GM10248 (cell line): ENCODE measurements at regions of chr17 and their contacts with region 1.

Region 1: DNA sequence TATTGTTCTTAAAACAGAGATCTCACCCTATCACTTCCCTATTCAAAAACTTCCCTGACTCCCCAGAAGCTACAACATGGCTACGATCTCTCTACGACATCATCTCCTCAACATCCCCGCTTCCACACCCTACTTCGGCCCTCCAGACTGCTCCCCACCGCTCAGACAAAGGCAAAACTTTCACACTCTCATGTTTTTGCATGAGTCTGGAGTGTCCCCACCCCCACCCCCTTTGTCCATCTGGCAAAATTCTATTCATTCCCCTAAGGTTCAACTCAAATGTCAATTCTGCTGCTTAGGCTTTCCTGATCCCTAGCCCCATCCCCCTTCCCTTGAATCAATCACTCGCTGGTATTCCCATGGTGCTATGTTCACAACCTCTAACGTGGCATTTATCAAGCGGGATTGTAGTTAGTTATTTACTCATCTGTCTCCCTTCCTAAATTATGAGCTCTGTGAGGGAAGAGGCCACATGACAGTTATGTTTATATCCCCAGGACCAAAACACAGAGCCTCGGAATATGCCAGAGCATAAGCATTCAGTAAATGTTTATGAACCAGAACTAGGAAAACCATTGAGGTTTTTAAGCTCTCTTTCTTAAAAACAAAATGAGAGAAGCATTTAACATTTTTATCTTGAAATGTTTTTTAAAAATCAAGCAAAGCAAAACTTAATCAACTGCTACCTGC is 55.9 kb downstream of the STX8 start:
- DNase-seq: no peak
- CTCF ChIP-seq: no peak

Region 2: DNA sequence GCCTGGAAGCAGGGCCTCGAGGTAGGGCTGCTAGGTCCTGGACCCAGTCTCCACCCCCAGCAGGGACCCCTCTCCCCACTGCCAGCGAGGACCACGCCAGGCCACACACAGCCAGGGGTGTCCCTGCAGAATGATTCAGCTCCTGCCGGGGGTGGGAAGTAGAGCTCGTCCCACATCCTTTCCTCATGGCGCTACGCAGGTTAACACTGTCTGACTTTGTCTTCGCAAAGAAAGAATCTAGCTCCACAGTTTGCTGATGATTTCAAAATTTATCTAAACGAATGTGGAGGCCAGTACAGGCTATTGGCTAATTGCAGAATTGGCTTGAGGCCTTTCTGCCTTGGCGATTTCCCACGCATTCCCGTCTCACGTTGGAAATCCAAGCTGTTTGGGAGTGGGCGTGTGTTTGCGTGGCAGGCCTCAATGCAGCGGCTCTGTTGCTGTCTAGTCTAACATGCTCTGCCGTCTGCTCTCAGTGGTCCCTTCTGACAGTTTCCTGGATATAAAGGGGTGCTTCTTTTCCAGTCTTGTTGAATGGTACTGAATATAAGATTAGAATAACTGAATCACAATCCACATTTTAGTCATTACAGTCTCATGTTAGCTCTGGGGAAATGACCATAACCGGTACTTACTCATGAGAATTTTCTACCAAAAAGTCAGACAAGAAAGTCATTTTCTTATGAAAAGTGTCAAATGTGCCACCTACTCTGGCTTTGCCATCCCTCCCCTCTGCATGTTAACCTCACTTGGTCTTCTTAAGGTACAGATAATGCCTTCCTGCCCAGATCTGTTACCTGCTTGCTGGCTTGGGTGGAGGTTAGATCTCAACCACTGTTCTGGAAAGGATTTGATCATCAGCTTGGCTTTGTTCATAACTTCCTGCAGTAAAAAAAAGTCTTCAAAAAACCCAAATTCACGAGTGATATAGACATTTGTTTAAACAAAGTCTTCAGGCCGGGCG is 246.0 kb before region 1 on chr17:
- CTCF ChIA-PET with region 1: no interaction called
- POLR2A ChIA-PET with region 1: interaction called, 10 read pairs
- DNase-seq: no peak
- CTCF ChIP-seq: no peak

Region 3: GRCh38 chr17:9696266-9697027 is 176.7 kb after region 1 on chr17:
- CTCF ChIA-PET with region 1: no interaction called
- POLR2A ChIA-PET with region 1: no interaction called
- DNase-seq: no peak
- CTCF ChIP-seq: no peak